Activated naive CD4-positive, alpha-beta T cell treated with anti-CD3 and anti-CD28 coated beads for 36 hours (primary cell): ENCODE measurements at regions of chr14 and their contacts with region 1.

Region 1: DNA sequence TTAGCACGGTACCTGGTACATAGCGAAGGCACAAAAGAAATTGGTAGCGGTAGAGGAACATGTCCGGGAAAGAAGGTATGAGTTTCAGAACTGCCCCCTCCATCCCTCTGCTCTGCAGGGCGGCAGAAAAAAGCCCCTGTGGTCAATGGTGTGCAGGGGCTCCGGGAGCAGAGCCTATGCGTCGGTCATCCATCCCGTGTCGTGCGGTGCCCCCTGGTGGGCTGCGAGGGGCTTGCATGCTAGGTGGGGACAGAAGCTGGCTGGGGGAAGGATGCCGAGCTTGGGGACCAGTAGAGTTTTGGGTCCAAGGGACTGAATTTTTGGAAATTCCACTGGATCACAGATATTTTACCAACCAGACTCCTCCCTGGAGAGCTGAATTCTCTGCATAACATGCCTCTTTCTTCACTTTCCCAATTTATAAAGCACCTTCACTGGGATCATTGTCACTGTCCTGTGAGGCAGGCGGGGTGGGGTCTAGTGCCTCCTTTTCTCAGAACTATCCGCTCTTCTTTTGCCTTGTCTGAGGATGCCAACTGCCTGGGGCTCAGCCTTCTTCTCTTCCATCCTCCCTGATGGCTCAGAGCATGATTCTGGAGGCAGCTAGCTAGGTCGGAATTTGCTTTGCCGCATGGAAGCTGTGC is 148.7 kb downstream of the SMOC1 start:
- DNase-seq: peak; percentile 78
- H3K4me3 Mint-ChIP-seq: no peak overlapping the region
- H3K27ac Mint-ChIP-seq: no peak overlapping the region
- H3K4me1 Mint-ChIP-seq: no peaks in the 10 kb centered on the region
- H3K27me3 Mint-ChIP-seq: no peaks in the 10 kb centered on the region

Region 2: GRCh38 chr14:69580009-69580577 is 447.8 kb before region 1 on chr14:
- CTCF ChIA-PET with region 1: interaction called, 3 read pairs
- intact Hi-C with region 1: loop called (anchors 1 kb)
- DNase-seq: peak; percentile 47
- H3K4me3 Mint-ChIP-seq: no peak overlapping the region
- H3K27ac Mint-ChIP-seq: no peak overlapping the region
- H3K4me1 Mint-ChIP-seq: no peaks in the 10 kb centered on the region
- H3K27me3 Mint-ChIP-seq: peaks cover 8% of the 10 kb centered on the region

Region 3: GRCh38 chr14:69879175-69880043 is 148.5 kb before region 1 on chr14 and contains the start of gene SMOC1:
- CTCF ChIA-PET with region 1: interaction called, 6 read pairs
- intact Hi-C with region 1: loop called (anchors 5 kb)
- DNase-seq: peak; percentile 53
- H3K4me3 Mint-ChIP-seq: peak within 1 kb of the TSS; percentile 34
- H3K27ac Mint-ChIP-seq: no peak within 1 kb of the TSS
- H3K4me1 Mint-ChIP-seq: no peaks in the 10 kb centered on the region
- H3K27me3 Mint-ChIP-seq: peaks cover 51% of the 10 kb centered on the region
- total RNA-seq, gene SMOC1: not detected

Region 4: DNA sequence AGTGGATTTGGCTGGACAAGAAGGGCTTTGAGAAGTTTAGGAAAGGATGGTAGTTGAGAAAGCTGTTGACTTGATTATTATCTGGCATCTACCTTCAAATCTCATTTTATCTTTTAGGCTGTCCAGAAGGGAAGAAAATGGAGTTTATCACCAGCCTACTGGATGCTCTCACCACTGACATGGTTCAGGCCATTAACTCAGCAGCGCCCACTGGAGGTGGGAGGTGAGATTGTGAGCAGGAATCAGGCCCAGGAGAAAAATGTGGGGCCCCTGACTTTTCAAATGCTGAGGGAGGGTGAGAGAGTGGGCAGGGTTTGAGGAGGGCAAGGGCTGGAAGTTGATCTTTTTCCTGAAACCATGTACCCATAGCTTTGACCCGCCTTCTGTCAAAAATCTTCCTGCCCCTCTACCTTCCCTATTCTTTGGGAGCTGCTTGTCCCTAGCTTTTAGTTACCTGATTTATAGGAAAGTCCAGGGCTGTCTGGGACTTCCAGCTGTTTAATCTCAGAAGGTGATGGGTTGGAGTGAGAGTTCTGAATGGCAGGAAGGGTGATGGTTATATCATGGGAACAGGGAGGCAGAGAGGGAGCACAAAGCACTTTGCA is 14.5 kb before region 1 on chr14:
- CTCF ChIA-PET with region 1: interaction called, 16 read pairs
- intact Hi-C with region 1: no loop called
- DNase-seq: peak; percentile 73
- H3K4me3 Mint-ChIP-seq: no peak overlapping the region
- H3K27ac Mint-ChIP-seq: no peak overlapping the region
- H3K4me1 Mint-ChIP-seq: peaks cover 2% of the 10 kb centered on the region
- H3K27me3 Mint-ChIP-seq: peaks cover 3% of the 10 kb centered on the region

Region 5: DNA sequence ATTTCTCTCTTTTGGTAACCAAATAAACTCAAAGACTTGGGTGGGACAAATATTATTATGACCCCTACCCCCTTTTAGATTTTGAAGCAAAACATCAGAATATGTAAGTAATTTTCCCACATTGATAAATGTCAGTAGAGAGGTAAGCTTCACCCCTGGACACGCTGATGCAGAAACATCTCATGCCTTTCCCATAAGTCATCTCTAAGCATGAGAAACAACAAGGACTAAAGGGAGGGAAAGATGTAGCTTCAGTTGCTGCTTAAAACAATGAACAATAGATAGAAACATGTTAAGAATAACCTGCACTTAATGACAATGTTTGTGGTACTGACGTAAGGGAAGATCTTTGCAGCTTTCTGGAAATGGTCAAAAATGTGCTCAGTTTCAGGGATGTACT is 217.1 kb after region 1 on chr14:
- CTCF ChIA-PET with region 1: no interaction called
- intact Hi-C with region 1: no loop called
- DNase-seq: no peak
- H3K4me3 Mint-ChIP-seq: no peak overlapping the region
- H3K27ac Mint-ChIP-seq: no peak overlapping the region
- H3K4me1 Mint-ChIP-seq: no peaks in the 10 kb centered on the region
- H3K27me3 Mint-ChIP-seq: peaks cover 39% of the 10 kb centered on the region